Naive thymus-derived CD4-positive, alpha-beta T cell (primary cell): ENCODE measurements at regions of chr18 and their contacts with region 1.

Region 1: DNA sequence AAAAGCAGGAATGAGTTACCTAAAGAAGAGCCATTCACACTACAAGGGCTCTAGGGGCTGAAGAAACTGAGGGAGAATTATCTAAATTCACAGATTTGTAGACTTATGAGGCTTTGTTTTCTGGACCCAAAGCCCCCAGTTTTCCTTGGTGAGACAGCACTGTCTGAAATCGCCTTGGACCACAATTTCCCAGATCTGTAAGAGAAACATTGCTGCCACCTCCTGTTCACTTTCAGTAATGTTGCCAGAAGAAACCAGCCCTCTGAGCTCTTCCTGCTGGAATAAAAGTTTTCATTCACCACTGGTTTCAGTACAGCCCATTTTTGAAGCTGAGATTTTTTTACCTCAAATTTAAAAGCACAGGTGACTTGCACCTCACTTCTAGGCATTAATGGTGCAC is 169.2 kb downstream of the CDH20 start:
- DNase-seq: no peak
- ATAC-seq: no peak
- H3K4me3 ChIP-seq: no peak overlapping the region
- H3K4me3 Mint-ChIP-seq: no peak overlapping the region
- H3K27ac ChIP-seq: no peak overlapping the region
- H3K27ac Mint-ChIP-seq: no peak overlapping the region
- H3K4me1 ChIP-seq: no peaks in the 10 kb centered on the region
- H3K4me1 Mint-ChIP-seq: no peaks in the 10 kb centered on the region
- H3K27me3 ChIP-seq: no peaks in the 10 kb centered on the region
- H3K27me3 Mint-ChIP-seq: peaks cover 6 to 25% (median 13%) of the 10 kb centered on the region in 5 donors

Region 2: GRCh38 chr18:60684843-60685513 is 817.5 kb before region 1 on chr18:
- CTCF ChIA-PET with region 1: no interaction called
- POLR2A ChIA-PET with region 1: no interaction called
- intact Hi-C with region 1: loop called in 1 of 2 experiments (anchors 10 kb)
- DNase-seq: no peak
- ATAC-seq: no peak
- H3K4me3 ChIP-seq: no peak overlapping the region
- H3K4me3 Mint-ChIP-seq: no peak overlapping the region
- H3K27ac ChIP-seq: no peak overlapping the region
- H3K27ac Mint-ChIP-seq: peak overlapping the region in 1 of 9 donors; percentile 16
- H3K4me1 ChIP-seq: no peaks in the 10 kb centered on the region
- H3K4me1 Mint-ChIP-seq: no peaks in the 10 kb centered on the region
- H3K27me3 ChIP-seq: no peaks in the 10 kb centered on the region
- H3K27me3 Mint-ChIP-seq: no peaks in the 10 kb centered on the region

Region 3: DNA sequence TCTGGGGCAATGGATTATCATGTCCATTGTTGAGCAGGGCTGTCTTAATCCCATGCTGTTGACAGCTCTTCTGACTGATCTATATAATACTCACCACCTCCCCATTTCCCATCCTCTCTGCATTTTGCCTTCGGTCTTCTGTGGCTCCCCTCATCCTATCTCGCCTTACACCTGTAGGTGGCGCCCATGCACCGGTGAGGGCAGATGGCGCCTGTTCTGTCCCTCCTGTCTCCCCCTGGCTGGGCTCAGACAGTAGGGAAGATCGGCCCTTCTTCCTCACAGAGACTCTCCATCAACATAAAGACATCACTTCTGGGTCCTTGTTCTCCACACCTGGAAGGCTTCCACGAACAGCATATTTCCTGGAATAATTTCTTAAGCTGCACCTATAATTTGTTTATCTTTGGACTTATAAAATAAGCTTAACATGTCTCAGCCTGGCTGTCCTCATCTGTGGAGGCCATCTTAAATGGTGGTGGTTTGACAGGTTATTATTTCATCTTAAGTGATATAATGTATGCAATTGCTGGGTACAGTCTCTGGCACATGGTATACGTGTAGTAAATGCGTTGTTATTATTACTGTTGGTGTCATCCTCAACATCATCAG is 180.1 kb before region 1 on chr18:
- CTCF ChIA-PET with region 1: no interaction called
- POLR2A ChIA-PET with region 1: no interaction called
- intact Hi-C with region 1: loop called in 1 of 2 experiments (anchors 2 kb)
- DNase-seq: peak in 1 of 9 donors; percentile 45
- ATAC-seq: peak; percentile 41
- H3K4me3 ChIP-seq: no peak overlapping the region
- H3K4me3 Mint-ChIP-seq: no peak overlapping the region
- H3K27ac ChIP-seq: no peak overlapping the region
- H3K27ac Mint-ChIP-seq: no peak overlapping the region
- H3K4me1 ChIP-seq: no peaks in the 10 kb centered on the region
- H3K4me1 Mint-ChIP-seq: no peaks in the 10 kb centered on the region
- H3K27me3 ChIP-seq: no peaks in the 10 kb centered on the region
- H3K27me3 Mint-ChIP-seq: peaks cover 0 to 17% (median 6%) of the 10 kb centered on the region in 5 donors

Region 4: DNA sequence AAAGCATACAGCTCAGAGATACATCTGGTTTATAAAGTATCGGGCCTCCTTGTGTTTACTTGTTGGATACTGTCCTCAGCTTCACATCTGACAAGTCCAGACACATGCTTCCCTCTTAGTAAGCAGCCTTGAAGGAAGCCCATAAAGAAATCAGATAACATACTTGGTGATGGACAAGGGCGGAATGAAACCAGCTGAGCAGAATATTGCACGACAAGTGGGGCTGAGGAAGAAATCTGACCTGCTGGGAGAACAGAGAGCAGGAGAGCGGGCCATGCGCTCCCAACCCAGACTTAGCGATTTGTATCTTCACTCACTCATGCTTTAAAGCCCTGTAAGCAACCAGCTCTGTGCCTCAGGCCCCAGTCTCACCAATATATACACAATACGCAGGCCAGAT is 39.2 kb after region 1 on chr18:
- CTCF ChIA-PET with region 1: no interaction called
- POLR2A ChIA-PET with region 1: no interaction called
- intact Hi-C with region 1: no loop called
- DNase-seq: no peak
- ATAC-seq: no peak
- H3K4me3 ChIP-seq: no peak overlapping the region
- H3K4me3 Mint-ChIP-seq: no peak overlapping the region
- H3K27ac ChIP-seq: no peak overlapping the region
- H3K27ac Mint-ChIP-seq: no peak overlapping the region
- H3K4me1 ChIP-seq: no peaks in the 10 kb centered on the region
- H3K4me1 Mint-ChIP-seq: no peaks in the 10 kb centered on the region
- H3K27me3 ChIP-seq: no peaks in the 10 kb centered on the region
- H3K27me3 Mint-ChIP-seq: peaks cover 0 to 8% (median 5%) of the 10 kb centered on the region in 5 donors